Activated CD4-positive, alpha-beta memory T cell treated with anti-CD3 and anti-CD28 coated beads for 36 hours (primary cell): ENCODE measurements at regions of chr19 and their contacts with region 1.

Region 1: GRCh38 chr19:15332311-15332996 is at the start of gene BRD4:
- DNase-seq: peak; percentile 83
- H3K4me3 Mint-ChIP-seq: peak within 1 kb of the TSS; percentile 97
- H3K27ac Mint-ChIP-seq: peak within 1 kb of the TSS; percentile 94
- H3K4me1 Mint-ChIP-seq: peaks cover 44% of the 10 kb centered on the region
- H3K27me3 Mint-ChIP-seq: no peaks in the 10 kb centered on the region
- total RNA-seq, gene BRD4: 94.5 to 103 TPM

Region 2: GRCh38 chr19:15222738-15223648 is 109.5 kb before region 1 on chr19:
- CTCF ChIA-PET with region 1: no interaction called
- POLR2A ChIA-PET with region 1: no interaction called
- intact Hi-C with region 1: no loop called
- DNase-seq: peak; percentile 87
- H3K4me3 Mint-ChIP-seq: peak overlapping the region; percentile 75
- H3K27ac Mint-ChIP-seq: no peak overlapping the region
- H3K4me1 Mint-ChIP-seq: peaks cover 14% of the 10 kb centered on the region
- H3K27me3 Mint-ChIP-seq: peaks cover 18% of the 10 kb centered on the region

Region 3: GRCh38 chr19:15280915-15281683 is 51.4 kb before region 1 on chr19:
- CTCF ChIA-PET with region 1: interaction called, 3 read pairs
- POLR2A ChIA-PET with region 1: interaction called, 13 read pairs
- intact Hi-C with region 1: loop called (anchors 2 kb)
- DNase-seq: no peak
- H3K4me3 Mint-ChIP-seq: no peak overlapping the region
- H3K27ac Mint-ChIP-seq: peak overlapping the region; percentile 60
- H3K4me1 Mint-ChIP-seq: peaks cover 85% of the 10 kb centered on the region
- H3K27me3 Mint-ChIP-seq: no peaks in the 10 kb centered on the region

Region 4: GRCh38 chr19:15297416-15298224 is 34.8 kb before region 1 on chr19:
- CTCF ChIA-PET with region 1: interaction called, 3 read pairs
- POLR2A ChIA-PET with region 1: interaction called, 23 read pairs
- intact Hi-C with region 1: no loop called
- DNase-seq: peak; percentile 43
- H3K4me3 Mint-ChIP-seq: peak overlapping the region; percentile 33
- H3K27ac Mint-ChIP-seq: peak overlapping the region; percentile 95
- H3K4me1 Mint-ChIP-seq: peaks cover 98% of the 10 kb centered on the region
- H3K27me3 Mint-ChIP-seq: no peaks in the 10 kb centered on the region

Region 5: DNA sequence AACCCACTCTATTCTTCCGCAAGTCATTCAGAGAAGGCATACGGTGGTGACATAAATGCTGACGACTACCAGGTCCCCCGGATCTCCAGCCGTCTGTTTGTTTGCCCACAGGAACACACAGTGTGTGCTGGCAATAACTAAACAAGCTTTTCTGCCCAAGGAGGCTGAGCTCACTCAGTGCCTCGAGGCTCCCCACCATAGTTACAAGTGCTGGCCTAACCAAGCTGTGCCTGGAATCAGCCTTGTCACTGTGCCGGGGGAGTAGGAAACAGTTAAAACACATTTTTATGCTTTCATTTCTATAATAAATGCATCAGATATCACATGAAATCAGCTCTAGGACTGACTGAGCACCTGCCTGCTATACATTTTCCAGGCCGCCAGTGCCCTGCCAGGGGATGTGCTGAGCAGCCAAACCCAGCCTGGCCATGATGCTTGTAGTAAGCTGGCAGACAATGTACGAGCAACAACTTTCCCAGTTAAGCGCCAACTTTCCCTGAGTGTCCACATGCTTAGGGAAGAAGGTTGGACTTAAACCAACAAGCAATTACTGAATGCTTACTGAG is 28.2 kb before region 1 on chr19:
- CTCF ChIA-PET with region 1: interaction called, 3 read pairs
- POLR2A ChIA-PET with region 1: interaction called, 23 read pairs
- intact Hi-C with region 1: loop called (anchors 1 kb)
- DNase-seq: peak; percentile 82
- H3K4me3 Mint-ChIP-seq: peak overlapping the region; percentile 23
- H3K27ac Mint-ChIP-seq: peak overlapping the region; percentile 86
- H3K4me1 Mint-ChIP-seq: peaks cover 84% of the 10 kb centered on the region
- H3K27me3 Mint-ChIP-seq: no peaks in the 10 kb centered on the region

Region 6: GRCh38 chr19:15318241-15318691 is 14.2 kb before region 1 on chr19:
- CTCF ChIA-PET with region 1: no interaction called
- POLR2A ChIA-PET with region 1: interaction called, 20 read pairs
- intact Hi-C with region 1: no loop called
- DNase-seq: no peak
- H3K4me3 Mint-ChIP-seq: no peak overlapping the region
- H3K27ac Mint-ChIP-seq: peak overlapping the region; percentile 76
- H3K4me1 Mint-ChIP-seq: peaks cover 87% of the 10 kb centered on the region
- H3K27me3 Mint-ChIP-seq: no peaks in the 10 kb centered on the region

Region 7: DNA sequence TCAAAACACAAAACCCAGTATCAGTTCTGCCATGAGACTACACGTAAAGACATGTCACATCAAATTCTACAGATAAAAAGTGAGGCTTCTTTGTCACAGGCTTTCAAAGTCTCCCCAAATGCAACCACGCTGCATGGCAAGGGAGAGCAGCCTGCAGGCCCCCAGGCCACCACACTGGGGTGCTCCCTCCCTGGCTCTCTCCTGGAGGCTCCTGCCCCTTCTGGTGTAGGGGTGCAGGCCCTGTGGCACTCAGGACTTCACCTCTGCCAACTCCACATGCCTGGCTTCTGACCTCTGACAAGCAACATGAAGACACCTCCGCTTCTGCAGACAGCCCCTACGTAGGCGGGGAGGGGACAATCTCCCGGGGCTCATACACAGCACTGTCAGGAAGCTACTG is 32.8 kb after region 1 on chr19:
- CTCF ChIA-PET with region 1: no interaction called
- POLR2A ChIA-PET with region 1: no interaction called
- intact Hi-C with region 1: no loop called
- DNase-seq: no peak
- H3K4me3 Mint-ChIP-seq: no peak overlapping the region
- H3K27ac Mint-ChIP-seq: no peak overlapping the region
- H3K4me1 Mint-ChIP-seq: peaks cover 4% of the 10 kb centered on the region
- H3K27me3 Mint-ChIP-seq: no peaks in the 10 kb centered on the region

Region 8: GRCh38 chr19:15379083-15379995 is 46.9 kb after region 1 on chr19 and contains the start of gene AKAP8:
- CTCF ChIA-PET with region 1: interaction called, 3 read pairs
- POLR2A ChIA-PET with region 1: interaction called, 22 read pairs
- intact Hi-C with region 1: loop called (anchors 2 kb)
- DNase-seq: peak; percentile 99
- H3K4me3 Mint-ChIP-seq: peak within 1 kb of the TSS; percentile 95
- H3K27ac Mint-ChIP-seq: peak within 1 kb of the TSS; percentile 96
- H3K4me1 Mint-ChIP-seq: peaks cover 42% of the 10 kb centered on the region
- H3K27me3 Mint-ChIP-seq: peaks cover 2% of the 10 kb centered on the region
- total RNA-seq, gene AKAP8: 31.5 to 37.2 TPM